ENCODE measurements at regions of chr2 and their contacts with region 1.

Region 1: GRCh38 chr2:241508240-241509154 is at the start of gene STK25:
- DNase-seq: peak; percentile 97 to 98 (median 98)
- H3K4me3 ChIP-seq: peak within 1 kb of the TSS; percentile 29 to 58
- H3K4me3 Mint-ChIP-seq: peak within 1 kb of the TSS; percentile 81 to 85 (median 83)
- H3K27ac ChIP-seq: peak within 1 kb of the TSS; percentile 82
- H3K27ac Mint-ChIP-seq: peak within 1 kb of the TSS; percentile 62 to 94 (median 75)
- H3K4me1 ChIP-seq: peaks cover 18% of the 10 kb centered on the region
- H3K4me1 Mint-ChIP-seq: peaks cover 11 to 41% (median 22%) of the 10 kb centered on the region in 4 donors
- H3K27me3 ChIP-seq: no peaks in the 10 kb centered on the region
- H3K27me3 Mint-ChIP-seq: no peaks in the 10 kb centered on the region
- total RNA-seq, gene STK25: 178 to 182 TPM

Region 2: GRCh38 chr2:241355983-241356870 is 152.3 kb before region 1 on chr2 and contains the start of gene FARP2:
- CTCF ChIA-PET with region 1: no interaction called
- POLR2A ChIA-PET with region 1: no interaction called
- intact Hi-C with region 1: loop called (anchors 1 kb)
- DNase-seq: peak; percentile 97 to 99 (median 98)
- H3K4me3 ChIP-seq: peak within 1 kb of the TSS; percentile 47 to 63
- H3K4me3 Mint-ChIP-seq: peak within 1 kb of the TSS; percentile 82 to 89 (median 86)
- H3K27ac ChIP-seq: peak within 1 kb of the TSS; percentile 57
- H3K27ac Mint-ChIP-seq: peak within 1 kb of the TSS; percentile 77 to 97 (median 93)
- H3K4me1 ChIP-seq: peaks cover 15% of the 10 kb centered on the region
- H3K4me1 Mint-ChIP-seq: peaks cover 6 to 26% (median 15%) of the 10 kb centered on the region in 4 donors
- H3K27me3 ChIP-seq: no peaks in the 10 kb centered on the region
- H3K27me3 Mint-ChIP-seq: no peaks in the 10 kb centered on the region
- total RNA-seq, gene FARP2: 17.2 to 21.8 TPM

Region 3: GRCh38 chr2:241609859-241610793 is 101.6 kb after region 1 on chr2:
- CTCF ChIA-PET with region 1: no interaction called
- POLR2A ChIA-PET with region 1: no interaction called
- intact Hi-C with region 1: loop called (anchors 2 kb)
- DNase-seq: peak; percentile 89 to 91 (median 90)
- H3K4me3 ChIP-seq: peak overlapping the region; percentile 6 to 11
- H3K4me3 Mint-ChIP-seq: peak overlapping the region; percentile 42 to 81 (median 70)
- H3K27ac ChIP-seq: peak overlapping the region; percentile 50
- H3K27ac Mint-ChIP-seq: peak overlapping the region; percentile 61 to 95 (median 73)
- H3K4me1 ChIP-seq: peaks cover 18% of the 10 kb centered on the region
- H3K4me1 Mint-ChIP-seq: peaks cover 12 to 21% (median 18%) of the 10 kb centered on the region in 4 donors
- H3K27me3 ChIP-seq: no peaks in the 10 kb centered on the region
- H3K27me3 Mint-ChIP-seq: no peaks in the 10 kb centered on the region

Region 4: GRCh38 chr2:241637000-241637791 is 128.7 kb after region 1 on chr2 and contains the starts of genes ATG4B and THAP4:
- CTCF ChIA-PET with region 1: no interaction called
- POLR2A ChIA-PET with region 1: interaction called, 3 read pairs
- intact Hi-C with region 1: loop called (anchors 1 kb)
- DNase-seq: peak; percentile 73 to 89 (median 78)
- H3K4me3 ChIP-seq: peak within 1 kb of the TSS; percentile 65 to 90
- H3K4me3 Mint-ChIP-seq: peak within 1 kb of the TSS; percentile 86 to 98 (median 94)
- H3K27ac ChIP-seq: peak within 1 kb of the TSS; percentile 88
- H3K27ac Mint-ChIP-seq: peak within 1 kb of the TSS; percentile 82 to 98 (median 93)
- H3K4me1 ChIP-seq: peaks cover 35% of the 10 kb centered on the region
- H3K4me1 Mint-ChIP-seq: peaks cover 36 to 71% (median 48%) of the 10 kb centered on the region in 4 donors
- H3K27me3 ChIP-seq: no peaks in the 10 kb centered on the region
- H3K27me3 Mint-ChIP-seq: no peaks in the 10 kb centered on the region
- total RNA-seq, gene ATG4B: 87.7 to 96.9 TPM
- total RNA-seq, gene THAP4: 27.8 to 28.2 TPM

Measured in CD4-positive, alpha-beta memory T cell (primary cell).